HepG2 (cell line): ENCODE measurements at regions of chr14 and their contacts with region 1.

Region 1: DNA sequence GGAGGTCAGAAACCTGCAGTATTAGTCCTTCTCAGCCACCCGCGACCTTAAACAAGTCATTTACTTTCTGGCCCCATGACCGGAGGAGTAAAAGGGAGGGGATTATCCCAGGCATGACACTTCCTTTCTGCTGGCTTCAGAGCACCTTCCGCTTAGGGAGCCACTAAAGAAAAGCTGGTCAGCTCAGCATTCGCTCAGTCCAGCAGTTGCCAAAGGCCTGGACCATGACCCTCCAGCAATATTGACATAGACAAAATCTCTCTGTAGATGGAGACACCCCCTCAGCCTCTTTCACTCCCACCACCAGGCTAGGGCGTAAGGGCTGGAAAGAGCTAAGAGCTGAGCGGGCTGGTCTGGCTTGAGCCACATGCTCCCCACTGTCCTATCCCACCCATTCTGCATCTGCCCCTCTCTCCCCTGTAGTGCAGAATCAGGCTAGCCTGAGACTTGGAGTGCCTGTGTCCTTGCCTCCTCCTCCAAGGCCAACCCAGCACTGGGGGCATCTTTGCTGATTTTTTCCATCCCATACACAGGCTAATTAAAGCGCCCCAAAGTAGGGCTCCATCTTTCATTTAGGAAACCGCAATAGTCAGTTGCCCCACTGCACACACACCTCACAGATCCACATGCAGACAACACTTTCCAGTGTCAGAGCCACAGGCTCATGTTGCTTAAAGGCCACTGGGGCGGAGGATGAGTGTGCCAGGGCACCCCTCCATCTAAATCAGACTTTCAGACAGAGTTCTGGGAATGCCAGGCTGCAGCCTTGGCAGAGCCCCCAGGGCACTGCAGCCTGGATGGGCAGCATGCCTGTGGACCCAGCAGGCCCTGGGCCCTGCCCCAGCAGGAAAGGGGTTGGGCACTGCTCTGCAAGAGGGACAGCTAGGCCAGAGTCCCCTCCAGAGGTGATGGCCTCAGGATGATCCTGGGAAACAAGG is 3.9 kb upstream of the CPNE6 start:
- DNase-seq: peak; percentile 72
- ATAC-seq: peak; percentile 78
- H3K4me3 ChIP-seq: peak overlapping the region in 2 of 3 experiments; percentile 6 to 49; a peak in 4 of 6 replicates
- H3K27ac ChIP-seq: peak overlapping the region; percentile 3
- H3K4me1 ChIP-seq: peaks cover 33% of the 10 kb centered on the region
- H3K27me3 ChIP-seq: peaks cover 11 to 49% of the 10 kb centered on the region in 2 experiments; a peak in 3 of 5 replicates
- CTCF ChIP-seq: peak; percentile 44
- EP300 ChIP-seq: peak in 1 of 2 experiments; percentile 25; a peak in 1 of 4 replicates
- POLR2A ChIP-seq: no peak
- RAD21 ChIP-seq: no peak

Region 2: DNA sequence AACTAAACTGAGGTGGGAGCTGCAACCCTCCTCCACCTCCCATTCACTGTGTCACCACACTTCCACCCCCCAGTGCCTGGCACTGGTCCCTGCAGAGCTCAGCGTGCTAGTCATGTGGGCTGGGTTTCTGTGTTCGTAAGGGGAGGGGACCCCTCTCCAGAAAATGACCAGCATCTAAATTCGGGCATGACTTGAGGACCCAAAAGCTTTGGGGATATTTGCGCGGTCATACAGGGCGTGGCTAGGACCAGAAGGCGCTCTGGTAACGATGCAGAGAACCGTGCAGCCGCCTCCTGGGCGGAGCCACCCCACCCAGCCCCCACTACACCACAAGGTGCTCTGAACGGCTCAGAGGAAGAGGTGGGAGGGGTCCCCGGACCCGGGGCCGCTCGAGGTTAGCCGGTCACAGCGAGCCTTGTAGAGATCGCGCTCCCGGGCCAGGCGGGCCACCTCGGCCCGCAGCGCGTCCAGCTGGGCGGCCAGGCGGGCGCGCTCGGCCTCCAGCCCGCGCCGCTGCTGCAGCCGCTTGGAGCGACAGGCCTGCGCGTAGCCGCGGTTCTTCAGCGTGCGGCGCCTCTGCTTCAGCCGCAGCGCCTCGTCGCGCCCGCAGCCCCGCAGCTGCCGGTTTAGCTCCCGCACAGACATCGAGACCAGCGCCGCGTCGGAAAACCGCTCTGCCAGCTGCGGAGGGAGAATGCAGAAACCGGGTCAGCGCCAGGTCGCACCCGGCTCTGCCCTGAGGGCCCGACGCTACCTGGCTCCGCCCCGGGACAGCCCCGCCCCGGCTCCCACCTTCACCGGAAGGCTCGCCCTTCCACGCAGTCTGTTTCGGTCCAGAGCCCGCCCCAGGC is 13.7 kb after region 1 on chr14:
- CTCF ChIA-PET with region 1: no interaction called
- POLR2A ChIA-PET with region 1: interaction called, 14 read pairs
- in situ Hi-C with region 1: no loop called
- intact Hi-C with region 1: no loop called
- DNase-seq: peak; percentile 38
- ATAC-seq: peak; percentile 83
- H3K4me3 ChIP-seq: peak overlapping the region; percentile 53 to 77 (median 73)
- H3K27ac ChIP-seq: no peak overlapping the region
- H3K4me1 ChIP-seq: peaks cover 22% of the 10 kb centered on the region
- H3K27me3 ChIP-seq: peaks cover 18 to 81% of the 10 kb centered on the region in 2 experiments
- CTCF ChIP-seq: peak; percentile 2; the same call in 1 of the 2 replicates
- EP300 ChIP-seq: no peak
- POLR2A ChIP-seq: peak in 1 of 2 experiments; percentile 33; a peak in 1 of 4 replicates
- RAD21 ChIP-seq: peak; percentile 55; the same call in 1 of the 2 replicates

Region 3: DNA sequence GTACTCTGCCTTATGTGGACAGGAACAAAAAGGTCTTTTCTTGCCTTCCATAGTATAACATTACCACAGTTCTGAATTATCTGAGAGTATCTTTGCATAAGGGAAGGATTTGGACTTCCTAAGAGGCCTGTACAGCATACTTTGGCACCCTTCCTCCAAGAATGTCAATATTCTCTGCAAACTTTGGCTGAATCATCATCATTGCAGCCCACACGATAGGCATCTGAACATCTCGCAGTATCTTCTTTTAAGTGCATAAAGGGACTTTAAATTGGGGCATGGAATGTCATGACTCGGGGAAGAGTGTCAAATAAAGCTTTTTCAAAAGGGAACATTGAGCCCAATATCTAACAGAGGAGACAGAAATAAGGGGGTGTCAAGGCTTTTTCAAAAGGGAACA is 1628.7 kb after region 1 on chr14:
- CTCF ChIA-PET with region 1: no interaction called
- POLR2A ChIA-PET with region 1: no interaction called
- in situ Hi-C with region 1: no loop called
- intact Hi-C with region 1: no loop called
- DNase-seq: no peak
- ATAC-seq: no peak
- H3K4me3 ChIP-seq: no peak overlapping the region
- H3K27ac ChIP-seq: no peak overlapping the region
- H3K4me1 ChIP-seq: no peaks in the 10 kb centered on the region
- H3K27me3 ChIP-seq: no peaks in the 10 kb centered on the region
- CTCF ChIP-seq: no peak
- EP300 ChIP-seq: no peak
- POLR2A ChIP-seq: no peak
- RAD21 ChIP-seq: no peak